Testis (tissue), 5 donors: ENCODE measurements at regions of chr6 and their contacts with region 1.

Region 1: GRCh38 chr6:159134701-159135364 is 34.4 kb upstream of the FNDC1 start:
- DNase-seq: peak; percentile 90
- H3K4me3 ChIP-seq: no peak overlapping the region
- H3K27ac ChIP-seq: no peak overlapping the region
- H3K4me1 ChIP-seq: peaks cover 36% of the 10 kb centered on the region
- H3K27me3 ChIP-seq: no peaks in the 10 kb centered on the region
- CTCF ChIP-seq: peak; percentile 87 to 94 (median 89)
- POLR2A ChIP-seq: no peak

Region 2: DNA sequence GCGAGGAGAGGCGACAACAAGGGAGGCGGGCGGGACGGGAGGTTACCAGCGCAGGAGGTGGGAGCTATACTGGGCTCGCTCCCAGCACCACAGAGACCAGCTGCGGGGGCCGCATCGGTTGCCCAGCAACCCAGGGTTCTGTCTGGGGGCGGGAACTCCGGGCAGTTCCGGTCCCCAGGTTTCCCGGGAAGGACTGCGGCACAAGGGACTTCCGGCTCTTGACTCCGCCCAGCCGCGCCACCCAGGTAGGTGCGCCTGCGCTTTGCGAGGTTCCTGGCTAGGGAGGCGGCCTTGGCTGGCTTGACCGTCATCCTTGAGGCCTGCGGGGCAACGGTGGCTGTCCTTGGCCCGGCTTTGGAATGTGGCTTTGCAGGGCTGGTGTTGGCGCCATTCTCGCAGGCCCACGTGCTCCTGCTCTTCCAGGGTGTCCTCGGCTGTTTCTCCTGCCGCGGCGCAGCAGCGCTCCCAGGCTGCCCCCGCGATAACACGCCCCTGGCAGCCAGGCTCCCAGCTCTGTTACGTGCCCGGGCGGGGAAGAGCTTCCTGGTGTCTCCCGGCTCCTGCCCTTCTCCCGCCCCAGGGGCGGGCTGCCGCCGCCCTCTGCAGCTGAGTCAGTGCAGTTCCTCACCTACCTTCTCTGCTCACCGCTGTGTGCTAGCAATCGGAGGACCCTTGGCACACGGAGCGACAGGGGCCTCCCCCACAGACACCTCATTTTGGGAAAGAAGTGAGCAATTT is 135.0 kb before region 1 on chr6 and contains the start of gene RSPH3:
- intact Hi-C with region 1: loop called (anchors 10 kb)
- DNase-seq: peak; percentile 96
- H3K4me3 ChIP-seq: peak within 1 kb of the TSS; percentile 88 to 93
- H3K27ac ChIP-seq: peak within 1 kb of the TSS; percentile 76 to 77
- H3K4me1 ChIP-seq: peaks cover 9% of the 10 kb centered on the region
- H3K27me3 ChIP-seq: no peaks in the 10 kb centered on the region
- CTCF ChIP-seq: no peak
- POLR2A ChIP-seq: no peak
- total RNA-seq, gene RSPH3: 15.7 to 23.6 TPM